HCT116 (cell line): ENCODE measurements at regions of chr14 and their contacts with region 1.

Region 1: DNA sequence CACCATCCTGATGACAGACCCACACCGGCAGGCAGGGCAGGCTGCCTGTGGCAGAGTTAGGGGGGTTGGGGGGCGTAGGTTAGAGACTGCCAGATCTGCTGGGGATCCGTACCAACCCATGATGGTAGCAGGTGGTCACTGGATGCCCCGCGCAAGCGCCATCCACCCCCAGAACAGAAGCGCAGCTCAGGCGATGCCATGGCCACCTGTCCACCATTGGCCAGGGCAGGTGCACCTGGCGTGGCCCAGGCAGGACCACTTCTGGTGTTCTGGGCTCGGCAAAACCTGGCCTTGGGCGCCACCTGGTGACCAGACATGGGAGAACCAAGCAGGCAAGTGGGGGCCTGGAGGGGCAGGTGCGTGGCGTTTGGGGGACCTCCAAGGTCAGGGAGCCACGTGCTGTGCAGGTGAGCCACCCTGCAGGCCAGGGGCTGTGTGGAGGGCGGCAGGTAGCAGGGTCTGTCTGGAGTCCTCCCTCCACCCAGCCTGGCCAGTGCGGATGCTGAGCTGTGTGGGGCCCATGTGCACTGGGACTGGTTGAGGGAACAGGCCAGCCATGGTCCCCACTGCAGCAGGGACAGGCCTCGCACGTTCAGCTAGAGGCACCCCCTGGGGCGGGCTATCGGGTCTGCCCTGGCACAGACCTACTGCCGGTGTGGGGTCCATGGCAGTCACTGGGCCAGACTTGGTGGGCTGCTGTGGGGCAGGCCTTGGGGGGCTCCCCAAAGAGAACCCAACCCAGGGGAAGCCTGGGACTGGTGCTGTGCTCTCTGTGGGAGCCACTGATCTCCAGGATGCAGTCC is 15.6 kb downstream of the BAG5 start:
- DNase-seq: peak; percentile 47
- ATAC-seq: peak; percentile 88
- H3K4me3 ChIP-seq: no peak overlapping the region
- H3K27ac ChIP-seq: no peak overlapping the region
- H3K4me1 ChIP-seq: peaks cover 15 to 30% of the 10 kb centered on the region in 2 experiments
- H3K27me3 ChIP-seq: no peaks in the 10 kb centered on the region
- CTCF ChIP-seq: peak in 2 of 3 experiments; percentile 78 to 88; a peak in 4 of 6 replicates
- POLR2A ChIP-seq: no peak
- RAD21 ChIP-seq: no peak

Region 2: DNA sequence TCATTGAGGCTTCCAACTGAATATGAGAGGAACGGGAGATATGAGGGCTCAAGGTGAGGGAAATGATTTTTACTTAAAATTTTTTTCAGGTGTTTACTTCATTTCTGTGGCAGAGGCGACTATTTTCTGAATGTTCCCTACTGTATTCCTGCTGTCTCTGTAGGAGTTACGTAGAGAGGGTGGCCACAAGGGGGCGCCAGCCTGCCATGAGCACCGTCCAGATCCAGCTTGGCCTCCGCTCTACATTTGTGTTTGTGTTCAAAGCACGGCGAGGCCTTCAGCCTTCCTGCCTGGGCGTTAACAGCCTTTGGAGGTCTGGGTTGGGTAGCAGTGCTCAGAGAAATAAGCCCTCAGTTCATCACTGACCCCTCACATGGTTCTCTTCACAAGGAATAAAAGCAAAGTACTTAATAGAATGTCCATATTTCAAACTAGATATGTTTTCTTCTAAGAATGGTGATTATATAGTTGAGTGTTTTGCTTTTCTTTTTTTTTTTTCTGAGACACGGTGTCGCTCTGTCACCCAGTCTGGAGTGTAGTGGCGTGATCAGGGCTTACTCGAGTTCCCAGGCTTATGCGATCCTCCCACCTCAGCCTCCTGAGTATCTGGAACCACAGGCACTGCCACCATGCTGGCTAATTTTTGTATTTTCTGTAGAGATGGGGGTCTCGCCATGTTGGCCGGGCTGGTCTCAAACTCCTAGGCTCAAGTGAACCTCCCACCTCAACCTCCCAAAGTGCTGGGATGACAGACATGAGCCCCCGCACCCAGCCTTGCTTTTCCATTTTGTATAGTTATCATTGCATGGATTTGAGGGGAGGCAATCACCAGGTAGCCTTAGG is 46.5 kb before region 1 on chr14:
- CTCF ChIA-PET with region 1: interaction called, 4 read pairs
- POLR2A ChIA-PET with region 1: no interaction called
- RAD21 ChIA-PET with region 1: no interaction called
- intact Hi-C with region 1: loop called (anchors 1 kb)
- DNase-seq: no peak
- ATAC-seq: peak; percentile 96
- H3K4me3 ChIP-seq: no peak overlapping the region
- H3K27ac ChIP-seq: no peak overlapping the region
- H3K4me1 ChIP-seq: no peaks in the 10 kb centered on the region
- H3K27me3 ChIP-seq: no peaks in the 10 kb centered on the region
- CTCF ChIP-seq: peak; percentile 50 to 96 (median 95); a peak in 5 of 6 replicates
- POLR2A ChIP-seq: no peak
- RAD21 ChIP-seq: peak; percentile 61

Region 3: GRCh38 chr14:103520657-103521437 is 26.0 kb before region 1 on chr14:
- CTCF ChIA-PET with region 1: interaction called, 38 read pairs
- POLR2A ChIA-PET with region 1: interaction called, 12 read pairs
- RAD21 ChIA-PET with region 1: interaction called, 5 to 7 read pairs
- intact Hi-C with region 1: loop called (anchors 1 kb)
- DNase-seq: peak; percentile 53
- ATAC-seq: peak; percentile 57
- H3K4me3 ChIP-seq: peak overlapping the region; percentile 78 to 83
- H3K27ac ChIP-seq: peak overlapping the region; percentile 73
- H3K4me1 ChIP-seq: peaks cover 13 to 45% of the 10 kb centered on the region in 2 experiments; a peak in 3 of 4 replicates
- H3K27me3 ChIP-seq: no peaks in the 10 kb centered on the region
- CTCF ChIP-seq: peak in 2 of 3 experiments; percentile 52 to 66; a peak in 4 of 6 replicates
- POLR2A ChIP-seq: no peak
- RAD21 ChIP-seq: no peak